OCI-LY7 (cell line): ENCODE measurements at regions of chr4 and their contacts with region 1.

Region 1: DNA sequence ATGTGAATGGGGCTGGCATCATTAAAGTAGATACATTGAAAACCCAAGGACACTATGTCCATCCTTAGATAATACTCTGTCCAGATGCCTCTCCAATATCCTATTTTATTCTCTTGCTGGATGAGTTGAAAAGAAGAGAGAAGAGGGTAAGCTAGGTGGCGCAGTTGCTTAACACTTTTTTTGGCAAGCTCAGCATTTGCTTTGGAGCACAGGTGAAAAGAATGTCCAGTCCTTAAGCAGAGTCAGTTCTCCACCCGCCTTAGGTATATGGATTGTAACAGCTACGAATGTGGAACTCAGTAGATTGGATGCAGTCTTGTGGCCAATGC is 208.4 kb downstream of the NWD2 start:
- DNase-seq: peak; percentile 43
- H3K4me3 ChIP-seq: no peak overlapping the region
- H3K27ac ChIP-seq: no peak overlapping the region
- H3K4me1 ChIP-seq: no peaks in the 10 kb centered on the region
- CTCF ChIP-seq: peak; percentile 81

Region 2: GRCh38 chr4:37561803-37562207 is 108.9 kb after region 1 on chr4:
- CTCF ChIA-PET with region 1: no interaction called
- POLR2A ChIA-PET with region 1: no interaction called
- intact Hi-C with region 1: loop called (anchors 1 kb)
- DNase-seq: no peak
- H3K4me3 ChIP-seq: no peak overlapping the region
- H3K27ac ChIP-seq: no peak overlapping the region
- H3K4me1 ChIP-seq: no peaks in the 10 kb centered on the region
- CTCF ChIP-seq: no peak

Region 3: GRCh38 chr4:37793562-37793961 is 340.6 kb after region 1 on chr4:
- CTCF ChIA-PET with region 1: no interaction called
- POLR2A ChIA-PET with region 1: no interaction called
- intact Hi-C with region 1: loop called (anchors 2 kb)
- DNase-seq: peak; percentile 39
- H3K4me3 ChIP-seq: no peak overlapping the region
- H3K27ac ChIP-seq: no peak overlapping the region
- H3K4me1 ChIP-seq: no peaks in the 10 kb centered on the region
- CTCF ChIP-seq: peak; percentile 76